Caco-2 (cell line): ENCODE measurements at regions of chr9 and their contacts with region 1.

Region 1: GRCh38 chr9:91053824-91054223 is 252.2 kb downstream of the SYK start:
- DNase-seq: no peak
- H3K4me3 ChIP-seq: no peak overlapping the region
- H3K4me3 Mint-ChIP-seq: no peak overlapping the region
- H3K27ac Mint-ChIP-seq: no peak overlapping the region
- H3K4me1 ChIP-seq: no peaks in the 10 kb centered on the region
- H3K4me1 Mint-ChIP-seq: no peaks in the 10 kb centered on the region
- H3K27me3 ChIP-seq: no peaks in the 10 kb centered on the region
- H3K27me3 Mint-ChIP-seq: peaks cover 5% of the 10 kb centered on the region
- CTCF ChIP-seq: no peak

Region 2: GRCh38 chr9:91075279-91075678 is 21.5 kb after region 1 on chr9:
- CTCF ChIA-PET with region 1: no interaction called
- POLR2A ChIA-PET with region 1: no interaction called
- intact Hi-C with region 1: loop called (anchors 1 kb)
- DNase-seq: no peak
- H3K4me3 ChIP-seq: no peak overlapping the region
- H3K4me3 Mint-ChIP-seq: no peak overlapping the region
- H3K27ac Mint-ChIP-seq: no peak overlapping the region
- H3K4me1 ChIP-seq: no peaks in the 10 kb centered on the region
- H3K4me1 Mint-ChIP-seq: peaks cover 8% of the 10 kb centered on the region
- H3K27me3 ChIP-seq: no peaks in the 10 kb centered on the region
- H3K27me3 Mint-ChIP-seq: no peaks in the 10 kb centered on the region
- CTCF ChIP-seq: no peak